Activated CD8-positive, alpha-beta T cell treated with anti-CD3 and anti-CD28 coated beads, Interleukin-2, amount 10 ng/mL, durations not matched to agents 7 days and 5 days (primary cell): ENCODE measurements at regions of chr1 and their contacts with region 1.

Region 1: GRCh38 chr1:101071470-101071891 is 45.9 kb upstream of the DPH5 start:
- DNase-seq: no peak
- ATAC-seq: no peak
- H3K4me3 Mint-ChIP-seq: no peak overlapping the region
- H3K27ac Mint-ChIP-seq: no peak overlapping the region
- H3K4me1 Mint-ChIP-seq: peaks cover 34% of the 10 kb centered on the region
- H3K27me3 Mint-ChIP-seq: no peaks in the 10 kb centered on the region

Region 2: DNA sequence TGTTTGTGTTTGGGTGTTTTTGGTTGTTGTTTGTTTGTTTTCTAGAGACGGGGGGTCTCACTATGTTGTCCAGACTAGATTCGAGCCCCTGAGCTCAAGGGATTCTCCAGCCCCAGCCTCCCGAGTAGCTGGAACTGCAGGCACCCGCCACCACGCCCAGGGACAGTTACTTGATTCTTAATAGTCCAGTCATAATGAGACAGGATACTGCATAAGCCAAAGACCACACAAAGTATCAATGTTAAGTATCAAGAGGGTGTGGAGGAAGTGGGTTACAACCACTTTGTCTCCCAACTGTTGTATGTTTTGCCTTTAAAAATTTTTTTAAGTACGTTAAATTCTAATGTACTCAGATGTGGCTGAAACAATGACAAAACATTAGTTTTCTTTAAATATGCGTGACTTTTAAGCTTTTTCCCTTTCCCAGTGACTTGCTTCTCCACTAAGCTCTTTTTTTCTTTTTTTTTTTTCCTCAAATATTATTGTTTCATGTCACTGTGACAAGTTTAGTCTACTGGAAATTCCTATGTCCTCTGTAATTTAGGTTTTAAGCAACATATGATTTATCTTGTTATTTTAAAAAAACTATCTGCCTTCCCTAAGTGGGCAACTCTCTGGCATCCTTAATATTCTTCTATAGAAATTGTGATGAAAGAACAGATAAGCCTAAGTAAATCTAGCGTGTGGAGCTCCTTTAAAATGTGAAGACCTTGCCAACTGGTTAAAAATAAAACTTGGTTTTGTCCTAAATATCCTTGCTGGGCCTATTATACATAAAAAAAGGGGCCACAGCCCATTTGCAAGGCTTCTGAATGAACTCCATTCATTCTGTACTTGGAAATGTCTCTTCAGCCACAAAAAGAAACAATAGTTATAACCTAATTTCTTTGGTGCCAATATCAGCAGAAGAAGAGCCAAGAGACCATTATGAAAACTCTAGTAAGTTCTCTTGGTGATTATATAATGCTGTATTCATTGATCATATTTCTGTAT is 10.3 kb after region 1 on chr1:
- CTCF ChIA-PET with region 1: interaction called, 10 read pairs
- POLR2A ChIA-PET with region 1: interaction called, 3 read pairs
- DNase-seq: peak; percentile 78
- ATAC-seq: peak; percentile 99
- H3K4me3 Mint-ChIP-seq: peak overlapping the region; percentile 34
- H3K27ac Mint-ChIP-seq: peak overlapping the region; percentile 94
- H3K4me1 Mint-ChIP-seq: peaks cover 63% of the 10 kb centered on the region
- H3K27me3 Mint-ChIP-seq: no peaks in the 10 kb centered on the region